Activated T-helper 2 cell treated with anti-CD3 and anti-CD28 coated beads, Interferon-gamma antibody, Interleukin-2, Interleukin-4, amounts not matched to agents 10 μg/mL and 5 μg/mL and 100 μg/mL, durations not matched to agents 14 hours and 24 hours and 36 hours (primary cell): ENCODE measurements at regions of chr5 and their contacts with region 1.

Region 1: GRCh38 chr5:174418928-174419796 is 305.2 kb upstream of the MSX2 start:
- DNase-seq: peak; percentile 64
- H3K4me3 Mint-ChIP-seq: no peak overlapping the region
- H3K27ac Mint-ChIP-seq: no peak overlapping the region
- H3K4me1 Mint-ChIP-seq: peaks cover 9% of the 10 kb centered on the region
- H3K27me3 Mint-ChIP-seq: peaks cover 2% of the 10 kb centered on the region

Region 2: DNA sequence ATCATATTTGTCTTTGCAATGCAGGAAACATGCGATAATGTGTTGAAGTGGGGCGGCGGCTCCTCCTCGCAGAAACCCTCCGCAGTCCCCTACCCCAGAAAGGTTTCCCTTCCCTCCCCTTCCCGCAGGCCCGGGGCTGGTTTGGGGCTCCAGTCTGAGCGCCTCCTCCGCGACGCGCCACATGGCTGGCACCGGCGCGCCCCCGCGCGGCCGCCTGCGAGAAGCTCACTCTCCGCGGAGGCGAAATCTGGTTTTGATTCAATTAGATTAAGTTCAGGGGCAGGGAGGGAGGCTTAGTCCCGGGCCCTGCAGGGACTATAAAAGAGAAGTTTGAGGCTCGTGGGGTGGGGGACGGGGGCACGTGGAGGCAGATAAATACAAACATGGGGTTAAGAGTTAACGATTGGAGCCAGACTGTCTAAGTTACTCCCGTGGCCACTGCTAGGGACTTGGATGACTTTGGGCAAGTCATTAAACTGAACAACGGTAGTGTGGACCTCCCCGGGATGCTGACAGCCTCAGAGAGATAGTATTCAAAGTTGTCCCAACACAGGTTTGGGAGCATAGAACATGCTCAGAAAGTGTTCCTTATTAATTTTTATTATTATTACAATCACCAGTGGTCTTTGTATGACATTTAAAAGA is 374.6 kb after region 1 on chr5:
- intact Hi-C with region 1: loop called (anchors 1 kb)
- DNase-seq: peak; percentile 29
- H3K4me3 Mint-ChIP-seq: no peak overlapping the region
- H3K27ac Mint-ChIP-seq: no peak overlapping the region
- H3K4me1 Mint-ChIP-seq: peaks cover 7% of the 10 kb centered on the region
- H3K27me3 Mint-ChIP-seq: peaks cover 14% of the 10 kb centered on the region